ENCODE measurements at regions of chr1 and their contacts with region 1.

Region 1: GRCh38 chr1:24199289-24199900 is 12.3 kb upstream of the IFNLR1 start:
- DNase-seq: peak; percentile 34
- H3K4me3 ChIP-seq: no peak overlapping the region
- H3K27ac ChIP-seq: no peak overlapping the region
- H3K27me3 ChIP-seq: no peaks in the 10 kb centered on the region
- CTCF ChIP-seq: peak; percentile 88

Region 2: DNA sequence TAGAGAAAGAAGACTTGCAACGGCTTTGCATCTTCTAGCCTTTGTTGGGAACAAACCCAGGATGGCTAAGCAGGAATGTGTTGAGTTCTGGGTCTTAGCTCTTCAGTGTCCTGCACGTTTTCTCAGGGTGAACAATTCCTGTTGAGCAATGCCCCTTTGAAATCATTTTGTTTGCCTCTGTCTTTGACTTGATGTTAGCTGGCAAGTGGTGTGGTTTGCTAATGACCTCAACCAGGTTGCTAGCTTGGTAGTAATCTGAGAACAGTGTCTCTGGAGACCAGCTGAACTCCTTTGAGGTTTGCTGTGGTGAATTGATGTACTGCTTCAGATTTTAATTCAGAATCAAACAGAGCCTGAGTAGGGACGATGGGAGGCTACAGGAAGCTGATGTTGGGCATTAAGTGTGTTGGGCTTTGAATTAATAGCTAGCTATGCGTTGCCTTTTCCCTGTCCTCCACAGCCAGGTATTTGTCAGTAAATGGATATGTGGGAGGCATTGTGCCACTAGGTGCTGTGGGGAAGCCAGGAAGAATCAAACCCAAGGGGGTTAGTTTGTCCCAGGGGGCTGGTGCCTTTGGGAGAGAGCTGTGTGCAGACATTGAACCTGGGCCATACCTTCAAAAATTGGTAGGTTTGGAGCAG is 195.9 kb before region 1 on chr1:
- in situ Hi-C with region 1: no loop called
- DNase-seq: peak; percentile 54
- H3K4me3 ChIP-seq: no peak overlapping the region
- H3K27ac ChIP-seq: no peak overlapping the region
- H3K27me3 ChIP-seq: no peaks in the 10 kb centered on the region
- CTCF ChIP-seq: no peak

Region 3: GRCh38 chr1:24391882-24392603 is 192.6 kb after region 1 on chr1:
- in situ Hi-C with region 1: loop called (anchors 10 kb)
- DNase-seq: peak; percentile 36
- H3K4me3 ChIP-seq: no peak overlapping the region
- H3K27ac ChIP-seq: no peak overlapping the region
- H3K27me3 ChIP-seq: no peaks in the 10 kb centered on the region
- CTCF ChIP-seq: peak; percentile 92